Ascending aorta (tissue), 2 donors: ENCODE measurements at regions of chr1 and their contacts with region 1.

Region 1: DNA sequence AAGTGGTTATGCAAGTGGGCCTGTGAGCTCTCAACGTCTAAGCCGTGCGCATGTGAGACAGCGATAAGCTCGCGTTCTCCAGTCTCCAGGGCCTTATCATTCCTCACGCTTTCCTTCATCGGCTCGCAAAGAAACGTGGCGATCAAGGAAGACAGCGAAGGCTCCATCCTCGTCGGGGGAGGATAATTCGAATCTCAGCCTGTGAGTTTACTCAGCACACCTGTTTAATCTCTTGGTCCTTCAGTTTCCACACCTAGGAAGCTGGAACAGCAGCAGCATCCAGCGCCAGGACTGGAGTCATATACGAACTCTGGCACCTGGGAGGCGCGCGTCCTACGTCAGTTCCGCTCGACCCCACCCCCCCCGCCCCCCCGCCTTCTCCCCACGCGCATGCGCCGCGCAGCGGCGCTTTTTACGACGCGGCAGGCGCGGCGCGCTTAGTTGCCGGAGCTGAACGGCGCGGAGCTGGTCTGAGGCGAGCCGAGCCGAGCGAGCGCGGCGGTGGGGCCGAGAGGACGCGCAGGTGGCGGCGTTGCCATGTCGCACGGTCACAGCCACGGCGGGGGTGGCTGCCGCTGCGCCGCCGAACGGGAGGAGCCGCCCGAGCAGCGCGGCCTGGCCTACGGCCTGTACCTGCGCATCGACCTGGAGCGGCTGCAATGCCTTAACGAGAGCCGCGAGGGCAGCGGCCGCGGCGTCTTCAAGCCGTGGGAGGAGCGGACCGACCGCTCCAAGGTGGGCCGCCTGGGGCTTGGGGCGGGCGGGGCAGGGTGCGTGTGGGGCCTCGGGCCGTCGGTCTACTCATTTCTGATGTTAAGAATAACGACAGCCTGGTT is at the start of gene PITHD1:
- DNase-seq: peak in 1 of 2 donors; percentile 87
- H3K4me3 ChIP-seq: peak within 1 kb of the TSS; percentile 95 to 96
- H3K27ac ChIP-seq: peak within 1 kb of the TSS; percentile 92 to 93
- H3K4me1 ChIP-seq: peaks cover 10 to 15% of the 10 kb centered on the region in 2 donors
- H3K27me3 ChIP-seq: no peaks in the 10 kb centered on the region
- CTCF ChIP-seq: no peak
- total RNA-seq, gene PITHD1: 60.1 TPM

Region 2: GRCh38 chr1:23103001-23103889 is 675.0 kb before region 1 on chr1:
- intact Hi-C with region 1: no loop called
- DNase-seq: no peak
- H3K4me3 ChIP-seq: no peak overlapping the region
- H3K27ac ChIP-seq: peak overlapping the region; percentile 51 to 53
- H3K4me1 ChIP-seq: peaks cover 10 to 39% of the 10 kb centered on the region in 2 donors
- H3K27me3 ChIP-seq: no peaks in the 10 kb centered on the region
- CTCF ChIP-seq: no peak

Region 3: GRCh38 chr1:23743287-23744052 is 34.7 kb before region 1 on chr1 and contains the start of gene ELOA:
- intact Hi-C with region 1: no loop called
- DNase-seq: peak in 1 of 2 donors; percentile 78
- H3K4me3 ChIP-seq: peak within 1 kb of the TSS; percentile 74 to 98
- H3K27ac ChIP-seq: peak within 1 kb of the TSS; percentile 81 to 87
- H3K4me1 ChIP-seq: peaks cover 4 to 12% of the 10 kb centered on the region in 2 donors
- H3K27me3 ChIP-seq: no peaks in the 10 kb centered on the region
- CTCF ChIP-seq: no peak
- total RNA-seq, gene ELOA: 22.6 TPM

Region 4: GRCh38 chr1:23800400-23801337 is 22.5 kb after region 1 on chr1 and contains the start of gene GALE:
- intact Hi-C with region 1: loop called (anchors 1 kb)
- DNase-seq: peak; percentile 87 to 98
- H3K4me3 ChIP-seq: peak within 1 kb of the TSS; percentile 82 to 93
- H3K27ac ChIP-seq: peak within 1 kb of the TSS; percentile 87 to 97
- H3K4me1 ChIP-seq: peaks cover 9 to 14% of the 10 kb centered on the region in 2 donors
- H3K27me3 ChIP-seq: no peaks in the 10 kb centered on the region
- CTCF ChIP-seq: no peak
- total RNA-seq, gene GALE: 30.4 TPM

Region 5: GRCh38 chr1:24027838-24028468 is 249.8 kb after region 1 on chr1:
- intact Hi-C with region 1: loop called (anchors 10 kb)
- DNase-seq: no peak
- H3K4me3 ChIP-seq: no peak overlapping the region
- H3K27ac ChIP-seq: no peak overlapping the region
- H3K4me1 ChIP-seq: peaks cover under 1 to 6% of the 10 kb centered on the region in 2 donors
- H3K27me3 ChIP-seq: no peaks in the 10 kb centered on the region
- CTCF ChIP-seq: peak; percentile 46 to 71 (median 65)